B cell (primary cell): ENCODE measurements at regions of chr10 and their contacts with region 1.

Region 1: DNA sequence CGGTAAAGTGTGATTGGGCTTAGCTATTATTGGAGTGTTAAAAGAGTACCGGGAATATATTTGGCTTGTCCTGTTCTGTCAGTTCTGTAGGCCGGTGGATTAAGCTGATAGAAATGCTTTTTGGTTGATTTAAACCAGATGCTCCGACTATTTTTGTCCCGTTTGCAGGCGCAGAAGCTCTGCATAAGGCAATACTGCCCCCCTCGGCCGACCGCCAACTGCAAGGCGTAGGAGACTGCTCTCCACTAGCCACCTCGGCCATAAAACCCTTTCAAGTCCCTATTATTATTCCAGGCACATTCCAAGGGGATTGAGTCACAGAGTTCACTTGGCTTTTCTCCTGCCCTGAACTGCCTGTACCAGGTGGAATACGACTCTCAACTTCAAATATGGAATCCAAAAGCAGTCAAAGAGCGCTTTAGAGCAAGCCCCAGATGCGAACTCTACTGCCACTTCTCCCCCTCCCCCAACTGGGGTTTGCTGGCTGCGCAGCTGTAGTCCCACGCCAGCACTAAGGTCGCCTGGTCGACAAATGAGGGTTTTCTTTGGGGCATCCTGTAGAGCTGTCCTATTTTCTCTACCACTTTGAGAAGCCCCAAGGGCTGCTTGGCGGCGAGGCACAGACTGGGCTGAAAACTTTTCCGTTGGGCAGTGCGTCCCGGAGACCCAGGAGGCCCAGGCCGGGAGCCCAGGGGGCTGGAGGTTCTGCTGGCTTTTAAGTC is 108.3 kb downstream of the REEP3 start:
- DNase-seq: peak; percentile 89
- ATAC-seq: peak; percentile 56
- H3K4me3 ChIP-seq: peak overlapping the region; percentile 65 to 88 (median 81)
- H3K4me3 Mint-ChIP-seq: peak overlapping the region; percentile 97
- H3K27ac ChIP-seq: peak overlapping the region; percentile 61 to 66
- H3K27ac Mint-ChIP-seq: peak overlapping the region; percentile 96
- H3K4me1 ChIP-seq: peaks cover 17 to 28% of the 10 kb centered on the region in 2 donors
- H3K4me1 Mint-ChIP-seq: peaks cover 24% of the 10 kb centered on the region
- H3K27me3 ChIP-seq: no peaks in the 10 kb centered on the region
- H3K27me3 Mint-ChIP-seq: no peaks in the 10 kb centered on the region
- CTCF ChIP-seq: peak; percentile 90

Region 2: GRCh38 chr10:63133056-63133820 is 496.3 kb before region 1 on chr10 and contains the start of gene NRBF2:
- CTCF ChIA-PET with region 1: no interaction called
- POLR2A ChIA-PET with region 1: no interaction called
- intact Hi-C with region 1: loop called (anchors 1 kb)
- DNase-seq: peak; percentile 99
- ATAC-seq: peak; percentile 86
- H3K4me3 ChIP-seq: peak within 1 kb of the TSS; percentile 89 to 100 (median 95)
- H3K4me3 Mint-ChIP-seq: peak within 1 kb of the TSS; percentile 93
- H3K27ac ChIP-seq: peak within 1 kb of the TSS; percentile 99
- H3K27ac Mint-ChIP-seq: peak within 1 kb of the TSS; percentile 97
- H3K4me1 ChIP-seq: peaks cover 26 to 36% of the 10 kb centered on the region in 2 donors
- H3K4me1 Mint-ChIP-seq: peaks cover 43% of the 10 kb centered on the region
- H3K27me3 ChIP-seq: peaks cover 0 to 2% (median 0%) of the 10 kb centered on the region in 4 experiments
- H3K27me3 Mint-ChIP-seq: peaks cover 3% of the 10 kb centered on the region
- CTCF ChIP-seq: peak; percentile 39
- total RNA-seq, gene NRBF2: 20.5 and 24.6 TPM in 2 replicates

Region 3: DNA sequence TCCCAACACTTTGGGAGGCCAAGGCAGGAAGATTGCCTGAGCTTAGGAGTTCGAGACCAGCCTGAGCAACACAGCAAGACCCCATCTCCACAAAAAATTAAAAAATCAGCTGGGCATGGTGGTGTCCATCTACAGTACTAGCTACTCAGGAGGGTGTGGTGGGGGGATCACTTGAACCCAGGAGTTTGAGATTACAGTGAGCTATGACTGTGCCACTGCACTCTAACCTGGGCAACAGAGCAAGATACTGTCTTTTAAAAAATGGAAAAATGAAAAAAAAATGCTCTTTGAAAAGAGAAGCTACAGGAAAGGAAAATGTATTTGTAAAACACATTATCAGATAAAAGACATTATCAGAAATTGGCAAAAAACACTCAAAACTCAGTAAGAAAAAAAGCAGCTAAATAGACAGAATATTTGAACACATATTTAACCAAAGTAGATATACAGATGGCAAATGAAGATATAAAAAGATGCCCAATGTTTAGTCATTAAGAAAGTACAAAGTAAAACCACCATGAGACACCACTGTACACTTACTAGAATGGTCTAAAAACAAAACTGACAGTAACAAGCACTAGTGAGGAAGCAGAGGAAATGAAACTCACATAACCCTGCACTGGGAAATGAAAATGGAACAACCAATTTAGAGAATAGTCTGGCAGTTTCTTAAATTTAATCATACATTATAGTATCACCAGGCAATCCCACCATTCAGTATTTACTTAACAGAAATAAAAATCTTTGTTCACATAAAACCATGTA is 455.9 kb before region 1 on chr10:
- CTCF ChIA-PET with region 1: interaction called, 129 read pairs
- POLR2A ChIA-PET with region 1: no interaction called
- intact Hi-C with region 1: no loop called
- DNase-seq: peak; percentile 70
- ATAC-seq: peak; percentile 91
- H3K4me3 ChIP-seq: no peak overlapping the region
- H3K4me3 Mint-ChIP-seq: peak overlapping the region; percentile 4
- H3K27ac ChIP-seq: peak overlapping the region; percentile 21 to 51
- H3K27ac Mint-ChIP-seq: peak overlapping the region; percentile 59
- H3K4me1 ChIP-seq: peaks cover 18 to 22% of the 10 kb centered on the region in 2 donors
- H3K4me1 Mint-ChIP-seq: peaks cover 31% of the 10 kb centered on the region
- H3K27me3 ChIP-seq: no peaks in the 10 kb centered on the region
- H3K27me3 Mint-ChIP-seq: no peaks in the 10 kb centered on the region
- CTCF ChIP-seq: no peak

Region 4: GRCh38 chr10:63268798-63269503 is 360.6 kb before region 1 on chr10:
- CTCF ChIA-PET with region 1: interaction called, 12 read pairs
- POLR2A ChIA-PET with region 1: interaction called, 5 read pairs
- intact Hi-C with region 1: loop called (anchors 2 kb)
- DNase-seq: peak; percentile 93
- ATAC-seq: peak; percentile 89
- H3K4me3 ChIP-seq: peak overlapping the region; percentile 64 to 100 (median 95)
- H3K4me3 Mint-ChIP-seq: peak overlapping the region; percentile 100
- H3K27ac ChIP-seq: peak overlapping the region; percentile 85 to 94
- H3K27ac Mint-ChIP-seq: peak overlapping the region; percentile 99
- H3K4me1 ChIP-seq: peaks cover 14 to 18% of the 10 kb centered on the region in 2 donors
- H3K4me1 Mint-ChIP-seq: peaks cover 31% of the 10 kb centered on the region
- H3K27me3 ChIP-seq: no peaks in the 10 kb centered on the region
- H3K27me3 Mint-ChIP-seq: no peaks in the 10 kb centered on the region
- CTCF ChIP-seq: peak; percentile 43

Region 5: GRCh38 chr10:63521416-63522276 is 107.9 kb before region 1 on chr10:
- CTCF ChIA-PET with region 1: interaction called, 13 read pairs
- POLR2A ChIA-PET with region 1: interaction called, 4 read pairs
- intact Hi-C with region 1: loop called (anchors 1 kb)
- DNase-seq: peak; percentile 91
- ATAC-seq: peak; percentile 62
- H3K4me3 ChIP-seq: peak overlapping the region; percentile 46 to 89 (median 82)
- H3K4me3 Mint-ChIP-seq: peak overlapping the region; percentile 91
- H3K27ac ChIP-seq: peak overlapping the region; percentile 75 to 79
- H3K27ac Mint-ChIP-seq: peak overlapping the region; percentile 89
- H3K4me1 ChIP-seq: peaks cover 6 to 17% of the 10 kb centered on the region in 2 donors
- H3K4me1 Mint-ChIP-seq: peaks cover 39% of the 10 kb centered on the region
- H3K27me3 ChIP-seq: no peaks in the 10 kb centered on the region
- H3K27me3 Mint-ChIP-seq: no peaks in the 10 kb centered on the region
- CTCF ChIP-seq: no peak

Region 6: GRCh38 chr10:63720072-63720537 is 90.6 kb after region 1 on chr10:
- CTCF ChIA-PET with region 1: interaction called, 74 read pairs
- POLR2A ChIA-PET with region 1: no interaction called
- intact Hi-C with region 1: loop called (anchors 1 kb)
- DNase-seq: peak; percentile 76
- ATAC-seq: peak; percentile 94
- H3K4me3 ChIP-seq: no peak overlapping the region
- H3K4me3 Mint-ChIP-seq: no peak overlapping the region
- H3K27ac ChIP-seq: no peak overlapping the region
- H3K27ac Mint-ChIP-seq: no peak overlapping the region
- H3K4me1 ChIP-seq: no peaks in the 10 kb centered on the region
- H3K4me1 Mint-ChIP-seq: peaks cover 7% of the 10 kb centered on the region
- H3K27me3 ChIP-seq: peaks cover 0 to 13% (median 2%) of the 10 kb centered on the region in 4 experiments
- H3K27me3 Mint-ChIP-seq: peaks cover 13% of the 10 kb centered on the region
- CTCF ChIP-seq: peak; percentile 100